OCI-LY7 (cell line): ENCODE measurements at regions of chr1 and their contacts with region 1.

Region 1: GRCh38 chr1:41416552-41417334 is 55.5 kb downstream of the FOXO6 start:
- DNase-seq: peak; percentile 61
- H3K4me3 ChIP-seq: no peak overlapping the region
- H3K27ac ChIP-seq: no peak overlapping the region
- H3K4me1 ChIP-seq: no peaks in the 10 kb centered on the region
- CTCF ChIP-seq: peak; percentile 87

Region 2: DNA sequence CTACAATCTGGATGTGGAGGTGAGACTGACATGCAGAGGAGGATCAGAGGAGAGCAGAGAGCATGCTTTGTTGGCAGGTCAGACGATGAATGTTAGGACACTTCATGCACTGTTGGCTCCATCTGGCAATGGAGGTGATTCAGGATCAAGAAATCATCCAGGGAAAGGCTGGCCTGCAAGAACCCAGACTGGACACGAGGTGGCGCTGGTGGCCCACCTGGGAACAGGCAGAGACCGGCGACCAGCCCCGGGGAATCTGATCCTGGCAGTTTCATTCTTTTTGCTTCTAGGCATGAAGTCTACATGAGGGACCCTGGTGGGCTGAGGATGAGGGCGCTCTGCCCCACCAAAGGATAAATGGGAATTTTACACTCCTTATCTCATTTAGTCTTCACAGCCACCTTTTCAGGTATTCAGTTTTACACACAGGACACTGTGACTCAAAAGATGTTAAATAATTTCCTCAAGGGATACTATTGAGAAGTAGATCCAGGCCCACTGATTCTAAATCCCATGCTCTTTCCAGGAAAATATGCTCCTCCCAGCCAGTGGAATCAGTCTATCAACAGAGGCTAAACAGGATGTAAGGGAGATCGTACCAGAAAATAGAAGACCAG is 148.5 kb before region 1 on chr1:
- CTCF ChIA-PET with region 1: no interaction called
- POLR2A ChIA-PET with region 1: no interaction called
- intact Hi-C with region 1: loop called (anchors 1 kb)
- DNase-seq: peak; percentile 53
- H3K4me3 ChIP-seq: no peak overlapping the region
- H3K27ac ChIP-seq: no peak overlapping the region
- H3K4me1 ChIP-seq: no peaks in the 10 kb centered on the region
- CTCF ChIP-seq: peak; percentile 94

Region 3: DNA sequence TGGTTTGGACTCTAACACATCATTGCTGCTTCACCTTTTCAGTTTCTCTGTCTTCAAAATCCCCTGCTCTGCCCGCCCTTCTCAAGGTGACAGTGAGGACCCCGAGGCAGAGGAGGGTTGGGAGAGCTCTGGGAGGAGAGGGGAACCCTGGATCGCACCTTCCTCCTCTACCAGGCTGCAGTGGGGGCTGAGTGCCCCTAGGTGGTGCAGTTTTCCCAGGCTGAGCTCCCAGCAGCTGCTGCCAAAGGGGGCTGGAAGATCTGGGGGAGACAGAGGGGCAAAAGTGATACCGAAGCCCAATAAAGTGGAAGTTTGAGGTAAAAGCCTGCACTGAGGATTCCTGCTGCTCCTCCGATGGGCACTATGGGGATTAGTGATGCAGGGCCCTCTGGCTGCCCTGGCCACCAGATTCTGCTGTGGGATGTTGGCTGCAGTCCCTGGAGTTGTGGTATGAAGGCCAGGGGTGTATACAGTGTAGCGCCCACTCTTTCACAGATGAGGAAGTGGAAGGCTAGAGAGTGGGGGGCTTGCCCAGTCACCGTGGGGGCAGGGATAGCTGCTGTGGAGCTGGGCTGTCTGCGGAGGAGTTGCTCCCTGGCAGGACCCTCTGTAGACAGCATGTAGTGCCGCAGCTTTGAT is 133.9 kb before region 1 on chr1:
- CTCF ChIA-PET with region 1: no interaction called
- POLR2A ChIA-PET with region 1: no interaction called
- intact Hi-C with region 1: loop called (anchors 1 kb)
- DNase-seq: peak; percentile 19
- H3K4me3 ChIP-seq: no peak overlapping the region
- H3K27ac ChIP-seq: no peak overlapping the region
- H3K4me1 ChIP-seq: no peaks in the 10 kb centered on the region
- CTCF ChIP-seq: peak; percentile 83

Region 4: DNA sequence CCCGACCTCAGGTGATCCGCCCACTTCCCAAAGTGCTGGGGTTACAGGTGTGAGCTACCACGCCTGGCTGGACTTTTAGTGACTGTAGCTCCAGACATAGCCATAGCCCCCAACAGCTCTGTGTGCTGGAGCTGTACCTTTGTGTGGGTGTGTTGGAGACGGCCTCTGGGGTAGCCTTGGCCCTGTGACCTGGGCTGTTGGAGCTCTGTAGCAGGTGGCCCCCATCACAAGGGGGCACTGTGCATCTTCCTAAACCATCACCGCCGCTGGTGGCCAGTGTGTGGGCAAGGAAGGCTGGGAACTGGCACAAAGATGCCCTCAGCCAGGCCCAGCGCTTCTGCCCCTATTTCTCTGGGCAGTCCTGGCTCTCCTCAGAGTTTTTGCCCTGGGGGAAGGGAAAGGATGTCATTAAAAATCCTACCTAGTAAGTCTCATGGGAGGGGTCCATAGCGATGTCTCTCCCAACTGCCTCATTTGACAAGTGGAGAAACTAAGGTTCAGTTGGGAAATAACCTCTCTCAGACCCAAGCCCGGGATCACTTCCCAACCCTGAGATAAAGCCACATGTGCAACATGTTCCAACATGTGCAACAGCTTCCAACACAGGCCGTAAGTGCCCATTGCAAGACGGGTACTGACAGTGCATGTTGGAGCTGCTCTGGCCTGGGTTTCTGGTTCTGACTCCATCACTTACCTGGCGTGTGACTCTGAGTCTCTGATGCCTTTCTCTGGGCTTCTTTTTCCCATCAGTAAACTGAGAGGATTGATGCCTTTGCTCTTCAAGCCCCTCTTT is 93.7 kb before region 1 on chr1:
- CTCF ChIA-PET with region 1: no interaction called
- POLR2A ChIA-PET with region 1: no interaction called
- intact Hi-C with region 1: loop called (anchors 1 kb)
- DNase-seq: peak; percentile 41
- H3K4me3 ChIP-seq: no peak overlapping the region
- H3K27ac ChIP-seq: no peak overlapping the region
- H3K4me1 ChIP-seq: no peaks in the 10 kb centered on the region
- CTCF ChIP-seq: peak; percentile 70

Region 5: DNA sequence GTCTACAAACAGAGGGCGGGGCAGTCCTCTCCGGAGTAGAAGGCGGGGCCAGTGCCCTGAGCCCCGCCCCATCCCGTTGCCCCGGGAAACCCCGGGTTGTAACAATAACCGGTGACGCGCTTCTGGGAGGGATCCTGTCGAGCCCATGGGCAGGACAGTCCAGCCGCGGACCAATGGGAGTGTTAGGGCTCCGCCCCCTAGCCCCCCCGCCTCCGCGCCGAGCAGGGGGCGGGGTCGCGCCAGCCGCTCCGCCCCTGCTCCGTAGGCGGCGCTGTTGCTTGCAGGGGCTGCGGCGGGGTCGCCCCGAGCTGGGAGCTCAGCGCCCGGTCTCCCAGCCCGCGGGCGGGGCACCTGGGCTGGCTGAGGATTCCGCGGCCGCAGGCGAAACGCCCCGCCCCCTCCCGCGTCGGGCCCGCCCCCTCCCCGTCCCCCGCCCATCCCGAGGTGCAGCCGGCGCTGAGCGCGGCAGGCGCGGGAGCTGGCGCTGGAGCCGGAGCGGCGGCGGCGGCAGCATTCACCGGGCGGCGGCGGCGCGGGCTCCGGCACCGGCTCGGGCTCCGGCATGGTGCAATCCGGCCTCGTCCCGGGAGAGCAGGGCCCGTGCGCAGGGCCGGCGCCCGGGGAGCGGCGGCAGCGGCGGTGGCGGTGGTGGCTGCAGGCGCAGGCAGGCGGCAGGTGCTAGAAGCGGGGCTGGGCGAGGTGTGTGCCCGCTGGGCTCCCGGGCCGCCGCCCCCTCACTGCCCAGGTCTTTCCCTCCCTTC is 55.6 kb before region 1 on chr1 and contains the start of gene FOXO6:
- CTCF ChIA-PET with region 1: interaction called, 3 read pairs
- POLR2A ChIA-PET with region 1: no interaction called
- intact Hi-C with region 1: loop called (anchors 10 kb)
- DNase-seq: peak; percentile 95
- H3K4me3 ChIP-seq: peak within 1 kb of the TSS; percentile 65
- H3K27ac ChIP-seq: no peak within 1 kb of the TSS
- H3K4me1 ChIP-seq: peaks cover 8% of the 10 kb centered on the region
- CTCF ChIP-seq: peak; percentile 55
- total RNA-seq, gene FOXO6: not detected in 2 replicates